Activated CD4-positive, alpha-beta T cell treated with anti-CD3 and anti-CD28 coated beads for 36 hours (primary cell): ENCODE measurements at regions of chr18 and their contacts with region 1.

Region 1: GRCh38 chr18:12883684-12884405 is at the start of gene PTPN2:
- DNase-seq: peak; percentile 93
- ATAC-seq: peak; percentile 88
- H3K4me3 Mint-ChIP-seq: peak within 1 kb of the TSS; percentile 78
- H3K27ac Mint-ChIP-seq: peak within 1 kb of the TSS; percentile 94
- H3K4me1 Mint-ChIP-seq: peaks cover 56% of the 10 kb centered on the region
- H3K27me3 Mint-ChIP-seq: no peaks in the 10 kb centered on the region
- total RNA-seq, gene PTPN2: 60.6 to 72.9 TPM

Region 2: GRCh38 chr18:11851146-11851805 is 1032.6 kb before region 1 on chr18 and contains the start of gene CHMP1B:
- CTCF ChIA-PET with region 1: no interaction called
- POLR2A ChIA-PET with region 1: no interaction called
- intact Hi-C with region 1: loop called in 1 of 2 experiments (anchors 5 kb)
- DNase-seq: peak; percentile 98
- ATAC-seq: peak; percentile 92
- H3K4me3 Mint-ChIP-seq: peak within 1 kb of the TSS; percentile 91
- H3K27ac Mint-ChIP-seq: peak within 1 kb of the TSS; percentile 99
- H3K4me1 Mint-ChIP-seq: peaks cover 25% of the 10 kb centered on the region
- H3K27me3 Mint-ChIP-seq: no peaks in the 10 kb centered on the region
- total RNA-seq, gene CHMP1B: 20.4 to 20.9 TPM

Region 3: DNA sequence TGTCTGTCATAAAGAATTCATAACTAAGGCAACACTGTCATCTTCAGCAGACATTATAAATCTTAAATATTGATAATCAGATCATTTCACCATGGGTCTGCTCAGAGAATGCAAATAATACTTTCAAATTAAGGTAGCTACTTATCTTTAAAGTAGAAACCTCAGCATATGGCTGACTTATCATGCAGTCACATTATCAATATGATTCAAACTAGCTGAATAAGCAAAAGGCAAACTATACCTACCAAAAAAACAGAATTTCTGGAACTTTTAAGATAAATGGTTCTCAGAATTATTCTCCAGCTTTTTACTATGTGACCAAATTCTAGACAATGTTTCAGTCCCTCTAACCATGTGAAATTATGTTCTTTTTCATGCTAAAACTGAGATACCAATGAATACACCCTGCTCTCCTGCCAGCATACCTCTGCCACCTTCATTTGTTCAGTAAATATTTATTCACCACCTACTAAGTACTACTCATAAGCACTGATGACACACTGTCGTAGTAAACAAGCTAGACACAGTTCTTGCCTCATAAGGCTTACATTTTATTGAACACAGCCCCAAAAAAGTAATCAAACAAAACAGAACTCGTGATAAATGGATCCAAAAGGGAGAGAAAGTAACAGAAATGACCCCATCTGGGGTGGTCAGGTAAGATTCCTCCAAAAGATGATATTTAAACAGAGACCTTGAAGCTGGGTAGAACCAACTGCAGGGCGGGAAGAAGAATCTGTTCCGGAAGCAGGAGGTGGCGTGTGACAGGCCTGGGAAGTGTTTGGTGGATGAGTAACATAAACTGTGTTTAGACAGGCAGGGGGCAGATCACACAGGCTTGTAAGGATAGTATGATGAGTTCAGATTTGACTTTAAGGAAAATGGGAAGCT is 243.6 kb before region 1 on chr18:
- CTCF ChIA-PET with region 1: no interaction called
- POLR2A ChIA-PET with region 1: no interaction called
- intact Hi-C with region 1: no loop called
- DNase-seq: no peak
- ATAC-seq: peak; percentile 51
- H3K4me3 Mint-ChIP-seq: no peak overlapping the region
- H3K27ac Mint-ChIP-seq: no peak overlapping the region
- H3K4me1 Mint-ChIP-seq: peaks cover 3% of the 10 kb centered on the region
- H3K27me3 Mint-ChIP-seq: peaks cover 14% of the 10 kb centered on the region

Region 4: GRCh38 chr18:12702221-12703095 is 181.4 kb before region 1 on chr18 and contains the starts of genes CEP76 and PSMG2:
- CTCF ChIA-PET with region 1: interaction called, 4 read pairs
- POLR2A ChIA-PET with region 1: interaction called, 9 read pairs
- intact Hi-C with region 1: loop called in 1 of 2 experiments (anchors 1 kb)
- DNase-seq: peak; percentile 90
- ATAC-seq: peak; percentile 85
- H3K4me3 Mint-ChIP-seq: peak within 1 kb of the TSS; percentile 96
- H3K27ac Mint-ChIP-seq: peak within 1 kb of the TSS; percentile 96
- H3K4me1 Mint-ChIP-seq: peaks cover 30% of the 10 kb centered on the region
- H3K27me3 Mint-ChIP-seq: no peaks in the 10 kb centered on the region
- total RNA-seq, gene CEP76: 12.5 to 13.9 TPM
- total RNA-seq, gene PSMG2: 113 to 118 TPM

Region 5: DNA sequence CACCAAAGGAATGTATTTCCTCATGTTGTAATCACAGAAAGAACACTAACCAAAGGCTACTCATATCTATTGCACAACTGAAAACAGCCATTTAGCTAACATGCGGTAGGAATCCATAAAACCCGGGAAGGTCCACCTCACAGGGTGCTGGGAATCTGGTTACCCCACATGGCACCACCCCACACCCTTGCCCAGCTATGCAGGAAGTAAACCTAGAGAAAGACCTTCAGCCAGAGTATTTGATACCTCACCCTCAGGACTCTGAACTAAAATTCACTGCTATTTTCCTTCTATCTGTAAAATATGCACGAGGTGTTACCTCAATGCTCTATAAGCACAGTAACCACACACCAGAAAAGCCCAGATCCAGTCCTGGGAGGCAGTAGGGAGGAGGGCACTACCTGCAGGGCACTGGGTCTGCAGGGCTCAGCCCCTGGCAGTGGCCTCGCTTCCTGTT is 45.6 kb before region 1 on chr18:
- CTCF ChIA-PET with region 1: interaction called, 7 read pairs
- POLR2A ChIA-PET with region 1: interaction called, 18 read pairs
- intact Hi-C with region 1: loop called (anchors 1 kb)
- DNase-seq: peak; percentile 16
- ATAC-seq: no peak
- H3K4me3 Mint-ChIP-seq: peak overlapping the region; percentile 56
- H3K27ac Mint-ChIP-seq: peak overlapping the region; percentile 92
- H3K4me1 Mint-ChIP-seq: peaks cover 64% of the 10 kb centered on the region
- H3K27me3 Mint-ChIP-seq: no peaks in the 10 kb centered on the region

Region 6: GRCh38 chr18:12934454-12935071 is 50.7 kb after region 1 on chr18:
- CTCF ChIA-PET with region 1: interaction called, 16 read pairs
- POLR2A ChIA-PET with region 1: interaction called, 3 read pairs
- intact Hi-C with region 1: no loop called
- DNase-seq: peak; percentile 87
- ATAC-seq: peak; percentile 91
- H3K4me3 Mint-ChIP-seq: no peak overlapping the region
- H3K27ac Mint-ChIP-seq: no peak overlapping the region
- H3K4me1 Mint-ChIP-seq: peaks cover 2% of the 10 kb centered on the region
- H3K27me3 Mint-ChIP-seq: no peaks in the 10 kb centered on the region

Region 7: DNA sequence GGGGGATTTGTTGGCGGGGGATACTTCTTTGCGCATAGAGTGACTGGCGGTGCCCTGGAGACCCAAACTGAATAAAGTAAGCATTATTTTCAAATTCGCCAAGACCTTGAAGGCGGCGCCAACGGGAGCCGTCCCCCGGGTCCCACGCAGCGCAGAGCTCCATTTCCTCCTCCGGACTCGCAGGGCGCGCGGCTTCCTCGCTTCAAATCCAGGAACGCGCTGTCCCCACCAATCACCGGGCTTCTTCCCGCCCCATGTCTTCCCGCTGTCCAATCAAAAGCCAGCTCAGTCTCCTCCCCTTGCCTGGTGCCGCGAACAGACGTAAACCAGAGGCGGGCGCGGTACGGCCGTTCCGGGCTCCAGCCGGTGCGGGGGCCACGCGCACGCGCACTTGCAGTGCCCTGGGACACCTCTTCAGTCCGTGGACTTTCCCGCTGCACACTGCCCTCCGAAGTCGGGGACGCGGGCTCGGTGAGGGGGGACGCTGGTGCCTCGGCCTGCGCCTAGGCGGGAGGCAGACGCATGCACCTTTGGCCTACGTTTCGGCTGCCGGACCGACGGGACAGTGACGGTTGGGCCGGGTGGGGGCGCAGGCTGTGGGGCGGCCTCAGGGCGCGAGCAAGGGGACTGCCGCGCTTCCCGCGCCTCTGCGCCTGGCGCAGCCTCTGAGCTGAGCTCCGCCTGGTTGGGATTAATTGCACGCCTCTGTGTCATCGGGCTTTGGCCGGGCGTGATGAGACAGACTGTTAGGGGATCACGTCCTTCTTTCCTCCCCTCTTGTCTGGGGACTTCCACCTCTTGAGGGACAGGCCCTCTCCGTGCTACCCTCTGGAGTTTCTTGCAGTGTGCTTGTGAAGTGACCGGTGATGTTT is 107.4 kb after region 1 on chr18 and contains the start of gene CEP192:
- CTCF ChIA-PET with region 1: interaction called, 4 read pairs
- POLR2A ChIA-PET with region 1: interaction called, 5 read pairs
- intact Hi-C with region 1: loop called in 1 of 2 experiments (anchors 1 kb)
- DNase-seq: peak; percentile 98
- ATAC-seq: peak; percentile 90
- H3K4me3 Mint-ChIP-seq: peak within 1 kb of the TSS; percentile 87
- H3K27ac Mint-ChIP-seq: peak within 1 kb of the TSS; percentile 93
- H3K4me1 Mint-ChIP-seq: peaks cover 21% of the 10 kb centered on the region
- H3K27me3 Mint-ChIP-seq: no peaks in the 10 kb centered on the region
- total RNA-seq, gene CEP192: 36.0 to 39.3 TPM

Region 8: GRCh38 chr18:14174706-14175085 is 1290.9 kb after region 1 on chr18:
- CTCF ChIA-PET with region 1: no interaction called
- POLR2A ChIA-PET with region 1: no interaction called
- intact Hi-C with region 1: no loop called
- DNase-seq: no peak
- ATAC-seq: no peak
- H3K4me3 Mint-ChIP-seq: no peak overlapping the region
- H3K27ac Mint-ChIP-seq: no peak overlapping the region
- H3K4me1 Mint-ChIP-seq: peaks cover 2% of the 10 kb centered on the region
- H3K27me3 Mint-ChIP-seq: no peaks in the 10 kb centered on the region